ENCODE measurements at regions of chr10 and their contacts with region 1.

Region 1: GRCh38 chr10:113563306-113564088 is 10.6 kb downstream of the HABP2 start:
- DNase-seq: peak; percentile 61 to 83 (median 80)
- H3K4me3 ChIP-seq: peak overlapping the region; percentile 21 to 76 (median 55)
- H3K27ac ChIP-seq: no peak overlapping the region
- H3K4me1 ChIP-seq: peaks cover 0 to 15% (median 8%) of the 10 kb centered on the region in 4 experiments
- H3K27me3 ChIP-seq: no peaks in the 10 kb centered on the region

Region 2: GRCh38 chr10:112471878-112472487 is 1091.5 kb before region 1 on chr10:
- CTCF ChIA-PET with region 1: interaction called, 13 read pairs
- POLR2A ChIA-PET with region 1: no interaction called
- DNase-seq: peak; percentile 49 to 78 (median 77)
- H3K4me3 ChIP-seq: no peak overlapping the region
- H3K27ac ChIP-seq: no peak overlapping the region
- H3K4me1 ChIP-seq: peaks cover 0 to 2% (median 0%) of the 10 kb centered on the region in 4 experiments
- H3K27me3 ChIP-seq: no peaks in the 10 kb centered on the region

Region 3: GRCh38 chr10:113521123-113521795 is 42.2 kb before region 1 on chr10:
- CTCF ChIA-PET with region 1: interaction called, 37 read pairs
- POLR2A ChIA-PET with region 1: no interaction called
- DNase-seq: peak; percentile 58 to 80 (median 76)
- H3K4me3 ChIP-seq: no peak overlapping the region
- H3K27ac ChIP-seq: no peak overlapping the region
- H3K4me1 ChIP-seq: peaks cover 0 to 8% (median 1%) of the 10 kb centered on the region in 4 experiments
- H3K27me3 ChIP-seq: no peaks in the 10 kb centered on the region

Region 4: DNA sequence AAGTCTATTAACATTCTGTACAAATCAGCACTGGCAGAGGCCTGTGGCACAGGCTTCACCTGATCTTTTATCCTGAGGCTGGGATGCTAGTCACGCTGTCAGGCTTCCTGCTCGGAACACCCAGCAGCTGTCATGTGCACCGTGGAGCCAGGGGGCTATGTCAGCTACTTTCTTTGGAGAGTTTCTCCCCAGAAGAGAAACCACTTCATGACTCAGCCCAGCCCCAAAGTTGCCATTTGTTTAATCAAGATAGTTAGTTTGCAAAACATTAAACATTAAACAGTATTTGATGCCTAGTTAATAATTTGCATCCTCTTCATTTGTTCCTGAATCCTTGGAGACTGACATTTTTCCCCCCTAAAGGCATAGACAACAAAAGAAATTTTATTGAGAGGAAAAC is 10.8 kb before region 1 on chr10 and contains the start of gene HABP2:
- CTCF ChIA-PET with region 1: interaction called, 12 read pairs
- POLR2A ChIA-PET with region 1: no interaction called
- DNase-seq: no peak
- H3K4me3 ChIP-seq: no peak within 1 kb of the TSS
- H3K27ac ChIP-seq: no peak within 1 kb of the TSS
- H3K4me1 ChIP-seq: peaks cover 5 to 47% (median 19%) of the 10 kb centered on the region in 4 experiments
- H3K27me3 ChIP-seq: no peaks in the 10 kb centered on the region

Measured in common myeloid progenitor, CD34-positive (primary cell).